ENCODE measurements at regions of chr5 and their contacts with region 1.

Region 1: DNA sequence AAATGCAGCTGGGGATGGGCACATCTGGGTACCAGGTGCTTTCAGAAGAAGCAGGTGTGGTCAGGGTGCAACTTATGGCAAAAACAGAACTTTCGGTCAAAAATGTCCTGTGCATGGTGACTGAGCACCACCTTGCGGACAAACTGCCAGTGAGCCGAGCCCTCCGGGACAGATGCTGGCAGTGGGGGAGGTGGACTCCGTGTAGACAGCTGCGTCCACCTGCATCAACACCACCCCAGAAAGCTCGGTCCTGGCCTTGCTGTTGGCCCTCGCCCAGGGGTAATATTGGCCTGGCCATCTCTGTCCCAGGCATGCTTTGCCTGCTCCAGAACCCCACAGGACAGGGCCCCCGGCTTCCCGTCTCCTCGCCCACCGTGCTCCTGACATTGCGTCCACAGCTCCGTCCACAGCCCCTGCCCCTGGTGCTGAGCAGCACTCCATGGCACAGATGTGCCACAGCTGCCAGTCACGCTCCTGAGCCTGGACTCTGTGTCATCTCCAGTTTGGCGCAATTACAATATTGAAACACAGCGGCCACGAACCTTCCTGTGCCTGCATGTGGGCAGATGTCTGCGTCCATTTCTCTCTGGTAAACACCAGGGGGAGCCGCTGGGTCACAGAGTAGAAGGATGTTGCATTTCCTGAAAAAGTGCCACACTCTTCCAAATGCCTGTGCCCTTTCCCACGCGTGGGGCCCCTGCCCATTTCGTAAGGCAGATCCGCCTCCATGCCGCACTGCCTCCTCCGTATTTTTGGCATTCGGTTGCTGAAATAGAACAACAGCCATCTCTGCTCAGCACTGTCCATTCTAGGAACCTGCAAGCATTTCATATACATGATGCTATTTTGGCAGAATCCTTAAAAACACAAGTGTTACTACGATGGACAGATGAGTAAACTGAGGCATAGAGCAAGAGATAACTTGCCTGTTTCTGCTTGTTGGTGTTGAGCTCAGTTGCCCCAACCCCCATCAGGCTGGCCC is 33.4 kb upstream of the SLC6A19 start:
- DNase-seq: peak; percentile 80
- H3K4me3 ChIP-seq: peak overlapping the region; percentile 33
- H3K27ac ChIP-seq: no peak overlapping the region
- H3K4me1 ChIP-seq: no peaks in the 10 kb centered on the region
- H3K27me3 ChIP-seq: no peaks in the 10 kb centered on the region
- CTCF ChIP-seq: peak; percentile 65

Region 2: DNA sequence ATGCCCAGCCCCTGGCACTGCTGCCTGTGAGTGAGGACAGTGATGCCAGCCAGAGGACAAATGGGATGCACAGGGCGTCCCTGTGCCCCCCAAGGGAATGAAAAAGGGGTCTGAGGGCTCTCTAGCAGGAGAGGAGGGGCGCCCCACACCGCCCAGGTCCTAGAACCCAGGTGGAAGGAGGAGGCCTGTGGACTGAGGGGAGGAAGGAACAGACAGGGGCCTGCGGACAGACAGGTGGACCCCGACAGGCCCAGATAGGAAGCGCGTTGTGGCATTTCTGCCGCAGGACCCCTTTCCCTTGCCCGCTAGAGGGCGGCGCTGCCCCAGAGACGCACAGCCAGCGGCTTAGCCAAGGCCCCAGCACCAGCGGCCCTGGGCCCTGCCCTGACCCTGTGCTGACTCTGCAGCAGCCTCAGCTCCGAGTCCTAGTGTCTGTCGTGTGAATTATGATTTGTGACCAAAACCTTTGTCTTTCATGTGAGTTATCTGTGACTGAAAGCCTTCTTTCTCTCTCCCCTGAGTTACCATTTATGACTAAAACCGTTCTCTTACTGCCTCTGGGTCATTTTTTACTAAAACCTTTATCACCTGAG is 244.6 kb before region 1 on chr5:
- CTCF ChIA-PET with region 1: interaction called, 4 read pairs
- POLR2A ChIA-PET with region 1: no interaction called
- intact Hi-C with region 1: loop called (anchors 1 kb)
- DNase-seq: peak; percentile 76
- H3K4me3 ChIP-seq: no peak overlapping the region
- H3K27ac ChIP-seq: no peak overlapping the region
- H3K4me1 ChIP-seq: no peaks in the 10 kb centered on the region
- H3K27me3 ChIP-seq: peaks cover 2% of the 10 kb centered on the region
- CTCF ChIP-seq: peak; percentile 92

Region 3: GRCh38 chr5:932628-933250 is 235.3 kb before region 1 on chr5:
- CTCF ChIA-PET with region 1: interaction called, 10 read pairs
- POLR2A ChIA-PET with region 1: no interaction called
- intact Hi-C with region 1: no loop called
- DNase-seq: no peak
- H3K4me3 ChIP-seq: no peak overlapping the region
- H3K27ac ChIP-seq: no peak overlapping the region
- H3K4me1 ChIP-seq: no peaks in the 10 kb centered on the region
- H3K27me3 ChIP-seq: no peaks in the 10 kb centered on the region
- CTCF ChIP-seq: no peak